ENCODE measurements at regions of chr2 and their contacts with region 1.

Region 1: DNA sequence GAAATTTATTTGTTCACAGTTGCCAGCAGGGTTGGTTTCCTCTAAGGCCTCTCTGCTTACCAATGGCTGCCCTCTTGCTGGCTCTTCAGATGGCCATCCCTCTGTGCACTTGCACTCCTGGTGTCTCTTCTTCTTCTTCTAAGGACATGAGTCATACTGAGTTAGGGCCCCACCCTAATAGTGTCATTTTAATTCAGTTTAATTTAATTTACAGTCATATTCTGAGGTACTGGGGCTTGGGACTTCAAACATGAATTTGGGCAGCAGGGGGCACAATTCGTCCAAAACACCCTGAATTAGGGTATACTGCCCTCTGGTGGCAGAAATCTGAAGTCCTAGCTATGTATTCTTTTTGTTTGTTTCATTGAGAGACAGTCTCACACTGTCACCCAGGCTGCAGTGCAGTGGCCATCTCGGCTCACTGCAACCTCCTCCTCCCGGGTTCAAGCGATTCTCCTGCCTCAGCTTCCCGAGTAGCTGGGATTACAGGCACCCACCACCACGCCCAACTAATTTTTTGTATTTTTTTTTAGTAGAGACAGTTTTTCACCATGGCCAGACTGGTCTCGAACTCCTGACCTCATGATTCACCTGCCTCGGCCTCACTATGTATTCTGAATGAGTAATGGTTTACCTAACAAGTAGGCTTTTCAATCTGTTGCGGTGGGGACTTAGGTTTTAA is 19.8 kb downstream of the SLC4A1AP start:
- DNase-seq: peak; percentile 76
- CTCF ChIP-seq: peak; percentile 99

Region 2: GRCh38 chr2:27622921-27623384 is 60.6 kb before region 1 on chr2:
- CTCF ChIA-PET with region 1: interaction called, 18 read pairs
- POLR2A ChIA-PET with region 1: no interaction called
- DNase-seq: no peak
- CTCF ChIP-seq: no peak

Region 3: GRCh38 chr2:27655155-27655951 is 28.2 kb before region 1 on chr2:
- CTCF ChIA-PET with region 1: interaction called, 111 read pairs
- POLR2A ChIA-PET with region 1: no interaction called
- DNase-seq: no peak
- CTCF ChIP-seq: no peak

Region 4: GRCh38 chr2:27672723-27673486 is 10.6 kb before region 1 on chr2:
- CTCF ChIA-PET with region 1: interaction called, 111 read pairs
- POLR2A ChIA-PET with region 1: no interaction called
- DNase-seq: no peak
- CTCF ChIP-seq: no peak

Region 5: GRCh38 chr2:27703638-27704341 is 20.3 kb after region 1 on chr2:
- CTCF ChIA-PET with region 1: interaction called, 66 read pairs
- POLR2A ChIA-PET with region 1: no interaction called
- DNase-seq: peak; percentile 75
- CTCF ChIP-seq: peak; percentile 87

Region 6: GRCh38 chr2:27771548-27772335 is 88.2 kb after region 1 on chr2 and contains the start of gene MRPL33:
- CTCF ChIA-PET with region 1: no interaction called
- POLR2A ChIA-PET with region 1: no interaction called
- DNase-seq: peak; percentile 97
- CTCF ChIP-seq: no peak

Region 7: DNA sequence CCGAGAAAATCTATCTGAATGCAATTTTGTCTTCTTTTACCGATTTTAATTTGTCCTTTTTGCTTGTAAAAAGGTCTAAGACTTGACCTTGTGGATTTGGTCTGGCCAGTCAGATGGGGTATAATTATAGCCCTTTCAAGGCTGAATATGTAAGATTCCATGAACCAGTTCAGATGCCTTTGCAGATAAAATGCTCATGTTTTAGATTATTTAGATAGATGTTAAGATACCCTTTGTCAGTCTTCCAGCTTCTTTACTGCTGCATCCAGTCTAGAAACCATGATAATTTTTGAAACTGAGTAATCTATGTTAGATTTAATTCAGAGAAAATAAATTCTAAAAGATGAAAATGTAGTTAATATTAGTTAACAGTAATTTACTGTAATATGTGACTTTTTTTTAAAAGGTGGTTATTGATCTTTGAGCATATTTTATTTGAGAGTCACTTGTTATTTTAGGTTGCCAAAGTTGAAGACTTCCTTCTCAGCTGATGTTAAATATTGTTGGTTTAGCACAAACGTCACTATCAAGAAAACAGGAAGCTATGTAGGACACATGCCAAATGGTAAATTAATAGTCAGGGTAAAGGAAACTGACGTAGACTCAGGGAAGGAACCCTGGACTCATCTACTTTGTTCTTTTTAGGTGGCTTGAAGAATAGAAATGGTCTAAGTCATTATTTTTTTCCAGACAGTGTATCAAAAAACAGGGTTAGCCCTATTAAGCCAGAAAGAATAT is 236.8 kb after region 1 on chr2:
- CTCF ChIA-PET with region 1: no interaction called
- POLR2A ChIA-PET with region 1: no interaction called
- DNase-seq: no peak
- CTCF ChIP-seq: no peak

Measured in GM10248 (cell line).